Psoas muscle (tissue), 8 donors: ENCODE measurements at regions of chr4 and their contacts with region 1.

Region 1: DNA sequence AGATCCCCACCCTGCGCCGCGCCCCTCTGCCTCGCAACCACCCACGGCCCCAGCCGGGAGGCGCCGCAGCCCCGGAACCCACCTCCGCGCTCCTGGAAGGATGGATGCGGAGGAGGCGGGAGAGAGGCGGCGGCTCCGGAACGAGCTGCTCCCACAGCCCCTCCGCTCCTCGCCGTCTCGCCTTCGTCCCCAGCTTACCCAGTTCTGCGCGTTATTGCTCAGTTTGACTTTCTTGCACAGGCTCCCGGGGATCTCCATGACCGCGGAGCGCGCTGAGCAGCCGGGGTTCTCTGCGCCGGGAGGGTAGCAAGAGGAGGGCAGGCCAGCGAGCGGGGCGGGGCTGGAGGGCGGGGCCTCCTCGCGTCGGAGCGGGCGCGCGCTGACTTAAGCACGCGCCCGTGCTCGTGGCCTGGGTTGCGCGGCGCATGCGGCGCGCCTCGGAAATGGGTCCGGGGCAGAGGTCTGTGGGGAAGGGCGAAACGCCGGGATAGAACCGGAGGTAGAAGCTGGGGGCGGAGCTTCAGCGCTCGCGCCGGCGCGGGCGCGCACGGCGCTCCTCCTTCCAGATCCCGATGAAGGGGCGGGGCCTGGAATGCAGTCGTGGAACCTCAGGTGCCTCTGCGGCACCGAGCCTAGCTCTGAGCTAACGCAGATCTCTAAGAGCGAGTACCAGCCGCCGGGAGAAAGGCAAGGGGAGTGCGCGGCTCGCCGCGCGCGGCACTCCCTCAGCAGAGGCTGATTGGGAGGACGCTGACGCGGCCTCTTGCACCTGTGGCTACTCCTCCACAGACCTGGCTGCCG is at the start of gene PAPSS1:
- DNase-seq: peak; percentile 95 to 98
- ATAC-seq: peak; percentile 97 to 99 (median 98)
- H3K4me3 ChIP-seq: peak within 1 kb of the TSS; percentile 99
- H3K27ac ChIP-seq: peak within 1 kb of the TSS; percentile 84
- H3K4me1 ChIP-seq: peaks cover 8% of the 10 kb centered on the region
- H3K27me3 ChIP-seq: no peaks in the 10 kb centered on the region
- CTCF ChIP-seq: no peak
- total RNA-seq, gene PAPSS1: 4.0 to 7.7 (median 5.6) TPM

Region 2: DNA sequence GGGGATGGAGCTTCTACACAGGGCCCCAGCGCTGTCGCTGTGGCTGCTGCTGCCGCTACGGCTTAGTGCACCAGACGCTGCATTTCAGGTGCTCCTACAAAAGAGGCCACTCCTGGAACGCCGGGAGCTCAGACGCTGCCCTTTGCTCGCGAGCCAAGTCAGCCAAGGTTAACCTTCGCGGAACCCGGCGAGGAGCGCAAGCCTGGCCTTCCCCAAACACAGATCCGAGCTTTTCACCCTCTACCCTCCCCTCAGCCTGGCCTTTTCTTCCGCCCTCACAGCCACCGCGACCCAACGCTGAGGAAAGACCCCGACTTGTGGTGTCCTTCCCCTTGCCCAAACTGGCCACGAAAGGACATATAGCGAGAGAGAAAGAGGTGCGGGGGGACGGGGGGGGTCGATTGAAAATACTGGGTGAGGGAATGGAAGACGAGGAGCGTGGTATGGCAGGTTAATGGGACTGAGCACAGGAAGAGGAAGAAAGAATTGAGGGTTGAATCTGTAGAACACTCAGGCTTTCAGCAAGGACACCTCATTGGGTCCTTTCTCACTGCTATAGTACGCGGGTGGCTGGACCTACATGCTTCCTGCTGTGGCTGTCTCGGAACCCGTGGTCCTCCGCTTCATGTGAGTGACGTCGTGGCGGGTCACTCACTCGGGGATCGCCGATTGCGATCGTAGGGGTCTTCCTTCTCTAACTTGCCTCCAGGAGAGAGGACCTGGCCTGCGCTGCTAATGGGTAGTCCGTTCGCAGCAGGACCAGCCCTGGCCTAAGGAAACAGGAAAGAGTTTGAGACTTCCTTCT is 1404.0 kb before region 1 on chr4 and contains the starts of genes AIMP1 and TBCK:
- intact Hi-C with region 1: loop called in 1 of 2 experiments (anchors 5 kb)
- DNase-seq: peak; percentile 88 to 94
- ATAC-seq: peak; percentile 96 to 98 (median 97)
- H3K4me3 ChIP-seq: peak within 1 kb of the TSS; percentile 88
- H3K27ac ChIP-seq: peak within 1 kb of the TSS; percentile 91
- H3K4me1 ChIP-seq: peaks cover 38% of the 10 kb centered on the region
- H3K27me3 ChIP-seq: no peaks in the 10 kb centered on the region
- CTCF ChIP-seq: no peak
- total RNA-seq, gene AIMP1: 36.0 to 65.5 (median 53.4) TPM
- total RNA-seq, gene TBCK: 9.7 to 16.8 (median 12.9) TPM

Region 3: DNA sequence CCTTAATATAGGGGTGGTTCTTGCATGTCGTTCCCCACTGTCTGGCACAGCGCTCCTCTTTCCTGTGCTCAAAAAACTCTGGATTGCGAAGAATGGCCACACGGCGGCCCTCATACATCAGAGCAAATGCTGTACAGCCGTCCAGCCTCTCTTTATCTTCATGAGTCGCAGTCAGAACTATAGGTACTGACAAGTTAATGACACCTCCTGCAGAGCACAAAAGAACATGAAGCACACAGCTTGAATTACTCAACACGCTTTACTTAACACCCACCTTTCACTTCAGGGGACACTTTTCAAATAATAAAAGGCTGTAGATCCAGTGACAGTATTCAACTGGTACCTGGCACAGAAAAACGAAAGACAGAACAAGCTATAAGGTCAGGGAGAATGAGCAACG is 65.4 kb before region 1 on chr4:
- intact Hi-C with region 1: loop called in 1 of 2 experiments (anchors 5 kb)
- DNase-seq: no peak
- ATAC-seq: no peak
- H3K4me3 ChIP-seq: no peak overlapping the region
- H3K27ac ChIP-seq: no peak overlapping the region
- H3K4me1 ChIP-seq: no peaks in the 10 kb centered on the region
- H3K27me3 ChIP-seq: no peaks in the 10 kb centered on the region
- CTCF ChIP-seq: no peak